Dorsolateral prefrontal cortex (tissue), 120 donors: ENCODE measurements at regions of chr10 and their contacts with region 1.

Region 1: GRCh38 chr10:71713135-71714030 is 6.2 kb downstream of the C10orf105 start:
- DNase-seq: peak; percentile 52 to 86 (median 84)
- H3K4me3 ChIP-seq: peak overlapping the region in 7 of 59 donors; percentile 1 to 36 (median 10)
- H3K27ac ChIP-seq: peak overlapping the region; percentile 87 to 99 (median 97)
- H3K27me3 ChIP-seq: no peaks in the 10 kb centered on the region
- CTCF ChIP-seq: peak in 14 of 56 donors; percentile 5 to 49 (median 18)

Region 2: GRCh38 chr10:71756311-71757191 is 43.2 kb after region 1 on chr10:
- intact Hi-C with region 1: loop called in 1 of 2 experiments (anchors 2 kb)
- DNase-seq: no peak
- H3K4me3 ChIP-seq: peak overlapping the region in 32 of 59 donors; percentile 1 to 55 (median 18)
- H3K27ac ChIP-seq: peak overlapping the region; percentile 34 to 92 (median 81)
- H3K27me3 ChIP-seq: no peaks in the 10 kb centered on the region
- CTCF ChIP-seq: peak in 1 of 56 donors; percentile 9

Region 3: DNA sequence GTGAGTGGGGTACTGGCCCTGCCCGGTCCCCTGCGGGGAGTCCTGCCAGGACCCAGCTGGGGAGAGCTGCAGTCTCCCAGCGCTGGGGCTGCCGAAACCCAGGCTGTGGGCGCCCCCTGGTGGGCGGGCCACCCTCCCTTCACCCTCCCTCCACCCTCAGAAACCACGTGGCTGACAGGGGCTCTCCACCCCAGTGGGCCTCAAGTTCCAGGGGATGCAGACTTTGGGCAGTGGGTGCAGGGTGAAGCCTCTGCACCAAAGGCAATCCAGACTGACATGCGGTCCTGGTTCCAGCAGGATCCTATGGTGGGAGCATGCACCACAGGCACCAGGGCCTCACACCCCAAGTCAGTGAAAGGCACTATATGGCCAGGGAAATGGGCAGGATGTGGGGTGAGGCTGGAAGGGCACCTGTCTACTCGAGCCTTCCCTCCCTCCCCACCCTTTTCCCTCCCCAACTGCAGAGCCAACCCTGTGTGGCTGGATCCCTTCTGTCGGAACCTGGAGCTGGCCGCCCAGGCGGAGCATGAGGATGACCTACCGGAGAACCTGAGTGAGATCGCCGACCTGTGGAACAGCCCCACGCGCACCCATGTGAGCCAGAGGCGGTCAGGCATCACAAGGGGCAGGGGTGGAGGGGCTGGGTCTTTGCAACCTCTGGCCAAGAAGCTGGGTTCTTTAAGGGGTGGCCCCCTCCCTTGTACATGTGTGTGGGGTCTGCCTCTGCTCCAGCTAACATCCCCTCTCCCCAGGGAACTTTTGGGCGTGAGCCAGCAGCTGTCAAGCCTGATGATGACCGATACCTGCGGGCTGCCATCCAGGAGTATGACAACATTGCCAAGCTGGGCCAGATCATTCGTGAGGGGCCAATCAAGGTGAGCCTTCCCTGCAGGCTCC is 98.9 kb after region 1 on chr10:
- intact Hi-C with region 1: loop called in 1 of 2 experiments (anchors 2 kb)
- DNase-seq: peak in 9 of 10 donors; percentile 56 to 83 (median 72)
- H3K4me3 ChIP-seq: no peak overlapping the region
- H3K27ac ChIP-seq: peak overlapping the region in 29 of 59 donors; percentile 6 to 87 (median 45)
- H3K27me3 ChIP-seq: no peaks in the 10 kb centered on the region
- CTCF ChIP-seq: peak; percentile 48 to 91 (median 80)

Region 4: DNA sequence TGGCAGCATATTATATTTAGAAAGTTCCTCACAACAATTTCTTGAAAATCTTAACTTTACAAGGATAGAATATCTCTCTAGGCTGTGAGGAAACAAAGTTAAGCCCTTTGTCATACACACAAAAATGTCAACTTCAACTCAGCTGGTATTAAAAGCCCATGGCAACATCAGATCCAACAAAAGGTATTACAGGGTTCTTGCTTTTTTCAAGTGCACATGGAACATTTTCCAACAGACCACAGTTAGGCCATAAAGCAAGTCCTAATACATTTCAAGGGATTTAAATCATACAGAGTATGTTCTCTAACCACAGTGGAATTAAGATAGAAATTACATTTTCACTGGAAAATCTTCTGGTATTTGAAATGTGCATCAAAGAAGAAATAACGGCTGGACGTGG is 1108.2 kb after region 1 on chr10:
- intact Hi-C with region 1: no loop called
- DNase-seq: no peak
- H3K4me3 ChIP-seq: no peak overlapping the region
- H3K27ac ChIP-seq: no peak overlapping the region
- H3K27me3 ChIP-seq: no peaks in the 10 kb centered on the region
- CTCF ChIP-seq: no peak